ENCODE measurements at regions of chr19 and their contacts with region 1.

Region 1: GRCh38 chr19:860481-861101 is 1.1 kb downstream of the CFD start:
- DNase-seq: peak; percentile 19 to 87 (median 56)
- ATAC-seq: peak; percentile 38
- H3K4me3 ChIP-seq: peak overlapping the region; percentile 20
- H3K4me3 Mint-ChIP-seq: peak overlapping the region; percentile 45
- H3K27ac ChIP-seq: no peak overlapping the region
- H3K27ac Mint-ChIP-seq: no peak overlapping the region
- H3K4me1 ChIP-seq: peaks cover 49% of the 10 kb centered on the region
- H3K4me1 Mint-ChIP-seq: peaks cover 23% of the 10 kb centered on the region
- H3K27me3 ChIP-seq: peaks cover 9 to 16% of the 10 kb centered on the region in 2 experiments
- H3K27me3 Mint-ChIP-seq: peaks cover 7% of the 10 kb centered on the region
- CTCF ChIP-seq: no peak

Region 2: DNA sequence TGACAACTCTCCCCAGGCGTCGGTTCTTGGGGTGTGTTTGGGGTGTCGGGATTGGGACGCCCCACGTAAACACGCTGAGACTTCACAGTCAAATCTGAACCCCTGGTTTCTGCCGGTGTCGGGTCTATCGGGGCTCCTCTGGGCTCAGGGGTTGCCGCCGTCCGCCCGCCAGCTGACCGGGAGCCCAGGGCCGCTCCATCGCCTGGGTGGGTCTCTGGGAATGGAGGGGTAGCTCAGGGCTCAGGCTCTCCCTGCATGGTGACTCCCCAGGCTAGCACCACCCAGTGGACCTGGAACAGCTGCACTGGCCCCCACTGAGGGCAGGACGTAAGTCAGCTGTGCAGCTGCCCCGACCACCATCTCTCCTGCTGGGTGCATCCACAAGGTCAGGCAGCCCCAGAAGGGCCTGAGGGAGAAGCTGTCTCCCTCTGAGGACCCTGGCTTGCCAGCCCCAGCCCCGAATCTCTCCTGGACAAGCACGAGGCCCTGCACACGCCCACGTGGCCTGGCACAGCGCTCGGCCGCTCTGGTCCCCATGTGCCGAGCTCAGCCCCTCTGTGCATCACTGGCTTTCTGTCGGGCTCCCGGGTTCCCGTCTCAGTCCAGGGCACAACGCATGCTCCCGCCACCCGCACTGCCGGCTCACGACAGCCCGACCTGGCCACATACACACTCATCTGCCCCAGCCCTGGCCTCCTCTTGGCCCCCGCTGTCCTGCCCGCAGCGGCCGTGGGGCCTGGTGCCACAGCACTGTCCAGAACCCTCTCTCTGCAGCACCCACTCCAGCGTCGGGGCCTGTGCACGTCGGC is 203.6 kb before region 1 on chr19:
- CTCF ChIA-PET with region 1: no interaction called
- POLR2A ChIA-PET with region 1: no interaction called
- intact Hi-C with region 1: no loop called
- DNase-seq: peak in 2 of 14 experiments; percentile 5 to 37
- ATAC-seq: no peak
- H3K4me3 ChIP-seq: no peak overlapping the region
- H3K4me3 Mint-ChIP-seq: no peak overlapping the region
- H3K27ac ChIP-seq: peak overlapping the region in 1 of 2 donors; percentile 35
- H3K27ac Mint-ChIP-seq: peak overlapping the region; percentile 97
- H3K4me1 ChIP-seq: peaks cover 94% of the 10 kb centered on the region
- H3K4me1 Mint-ChIP-seq: peaks cover 53% of the 10 kb centered on the region
- H3K27me3 ChIP-seq: no peaks in the 10 kb centered on the region
- H3K27me3 Mint-ChIP-seq: no peaks in the 10 kb centered on the region
- CTCF ChIP-seq: no peak

Region 3: GRCh38 chr19:872266-872951 is 11.8 kb after region 1 on chr19:
- CTCF ChIA-PET with region 1: interaction called, 13 read pairs
- POLR2A ChIA-PET with region 1: interaction called, 11 read pairs
- intact Hi-C with region 1: no loop called
- DNase-seq: peak; percentile 72 to 93 (median 80)
- ATAC-seq: peak; percentile 82
- H3K4me3 ChIP-seq: peak overlapping the region; percentile 58
- H3K4me3 Mint-ChIP-seq: peak overlapping the region; percentile 89
- H3K27ac ChIP-seq: peak overlapping the region; percentile 41 to 62
- H3K27ac Mint-ChIP-seq: peak overlapping the region; percentile 94
- H3K4me1 ChIP-seq: peaks cover 16% of the 10 kb centered on the region
- H3K4me1 Mint-ChIP-seq: peaks cover 18% of the 10 kb centered on the region
- H3K27me3 ChIP-seq: no peaks in the 10 kb centered on the region
- H3K27me3 Mint-ChIP-seq: no peaks in the 10 kb centered on the region
- CTCF ChIP-seq: no peak

Region 4: GRCh38 chr19:907183-907853 is 46.7 kb after region 1 on chr19:
- CTCF ChIA-PET with region 1: interaction called, 24 read pairs
- POLR2A ChIA-PET with region 1: interaction called, 24 read pairs
- intact Hi-C with region 1: no loop called
- DNase-seq: peak in 4 of 14 experiments; percentile 47 to 62 (median 53)
- ATAC-seq: no peak
- H3K4me3 ChIP-seq: no peak overlapping the region
- H3K4me3 Mint-ChIP-seq: peak overlapping the region; percentile 71
- H3K27ac ChIP-seq: peak overlapping the region; percentile 69 to 99
- H3K27ac Mint-ChIP-seq: peak overlapping the region; percentile 100
- H3K4me1 ChIP-seq: peaks cover 81% of the 10 kb centered on the region
- H3K4me1 Mint-ChIP-seq: peaks cover 56% of the 10 kb centered on the region
- H3K27me3 ChIP-seq: no peaks in the 10 kb centered on the region
- H3K27me3 Mint-ChIP-seq: no peaks in the 10 kb centered on the region
- CTCF ChIP-seq: no peak

Region 5: DNA sequence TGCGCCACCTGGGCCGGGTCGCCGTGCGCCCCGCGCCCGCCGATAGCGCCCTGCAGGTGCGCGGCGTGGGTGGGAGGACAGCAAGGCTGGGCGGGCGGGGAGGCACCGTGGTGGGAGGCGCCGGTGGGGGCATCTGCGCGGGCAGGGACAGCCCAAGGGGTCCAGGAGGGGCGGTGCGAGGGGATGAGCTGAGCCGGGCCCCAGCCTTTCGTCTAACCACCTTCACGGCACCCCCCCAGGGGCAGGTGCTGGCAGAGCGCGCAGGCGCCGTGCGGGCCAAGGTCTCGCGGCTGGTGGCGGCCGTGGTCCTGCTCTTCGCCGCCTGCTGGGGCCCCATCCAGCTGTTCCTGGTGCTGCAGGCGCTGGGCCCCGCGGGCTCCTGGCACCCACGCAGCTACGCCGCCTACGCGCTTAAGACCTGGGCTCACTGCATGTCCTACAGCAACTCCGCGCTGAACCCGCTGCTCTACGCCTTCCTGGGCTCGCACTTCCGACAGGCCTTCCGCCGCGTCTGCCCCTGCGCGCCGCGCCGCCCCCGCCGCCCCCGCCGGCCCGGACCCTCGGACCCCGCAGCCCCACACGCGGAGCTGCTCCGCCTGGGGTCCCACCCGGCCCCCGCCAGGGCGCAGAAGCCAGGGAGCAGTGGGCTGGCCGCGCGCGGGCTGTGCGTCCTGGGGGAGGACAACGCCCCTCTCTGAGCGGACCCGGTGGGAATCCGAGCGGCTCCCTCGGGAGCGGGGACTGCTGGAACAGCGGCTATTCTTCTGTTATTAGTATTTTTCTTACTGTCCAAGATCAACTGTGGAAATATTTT is 59.7 kb after region 1 on chr19:
- CTCF ChIA-PET with region 1: interaction called, 52 read pairs
- POLR2A ChIA-PET with region 1: interaction called, 40 read pairs
- intact Hi-C with region 1: loop called (anchors 1 kb)
- DNase-seq: peak; percentile 54 to 91 (median 72)
- ATAC-seq: peak; percentile 51
- H3K4me3 ChIP-seq: peak overlapping the region; percentile 43
- H3K4me3 Mint-ChIP-seq: peak overlapping the region; percentile 96
- H3K27ac ChIP-seq: peak overlapping the region in 1 of 2 donors; percentile 41
- H3K27ac Mint-ChIP-seq: peak overlapping the region; percentile 96
- H3K4me1 ChIP-seq: peaks cover 62% of the 10 kb centered on the region
- H3K4me1 Mint-ChIP-seq: peaks cover 21% of the 10 kb centered on the region
- H3K27me3 ChIP-seq: peaks cover 11 to 22% of the 10 kb centered on the region in 2 experiments
- H3K27me3 Mint-ChIP-seq: peaks cover 4% of the 10 kb centered on the region
- CTCF ChIP-seq: no peak

Region 6: DNA sequence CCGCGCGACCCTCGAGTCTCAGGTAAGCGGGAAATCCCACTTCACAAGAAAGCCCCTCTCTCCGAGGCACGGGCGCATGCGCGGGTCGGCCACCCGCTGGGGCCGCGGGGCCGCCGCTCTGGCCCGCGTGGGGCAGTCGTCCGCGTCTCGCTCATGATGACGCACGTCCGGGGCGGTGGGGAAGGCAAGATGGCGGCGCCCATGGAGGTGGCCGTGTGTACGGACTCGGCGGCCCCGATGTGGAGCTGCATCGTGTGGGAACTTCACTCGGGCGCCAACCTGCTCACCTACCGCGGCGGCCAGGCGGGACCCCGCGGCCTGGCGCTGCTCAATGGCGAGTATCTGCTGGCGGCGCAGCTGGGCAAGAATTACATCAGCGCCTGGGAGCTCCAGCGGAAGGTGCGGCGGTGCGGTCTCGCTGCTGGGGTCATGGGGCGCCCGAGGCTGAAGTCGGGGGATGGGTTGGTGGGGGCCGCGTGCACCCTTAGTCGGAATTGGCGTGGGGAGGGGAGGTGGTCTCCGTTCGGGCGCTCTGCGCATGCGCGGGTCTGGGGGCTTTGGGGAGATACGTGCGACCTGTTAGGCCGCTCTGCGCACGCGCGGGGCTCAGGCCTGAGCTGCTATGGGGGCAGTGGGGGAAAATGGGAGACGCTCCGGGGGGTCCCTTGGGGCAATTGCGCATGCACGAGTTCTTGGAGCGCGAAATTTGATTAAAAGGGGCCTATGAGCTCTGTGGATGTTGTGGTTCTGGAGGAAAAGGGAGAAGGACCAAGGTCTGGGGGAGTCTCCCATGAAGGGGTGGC is 123.8 kb after region 1 on chr19 and contains the start of gene WDR18:
- CTCF ChIA-PET with region 1: interaction called, 19 read pairs
- POLR2A ChIA-PET with region 1: interaction called, 5 read pairs
- intact Hi-C with region 1: loop called (anchors 2 to 5 kb)
- DNase-seq: peak; percentile 71 to 94 (median 84)
- ATAC-seq: peak; percentile 90
- H3K4me3 ChIP-seq: peak within 1 kb of the TSS; percentile 96
- H3K4me3 Mint-ChIP-seq: peak within 1 kb of the TSS; percentile 94
- H3K27ac ChIP-seq: peak within 1 kb of the TSS; percentile 72 to 75
- H3K27ac Mint-ChIP-seq: peak within 1 kb of the TSS; percentile 78
- H3K4me1 ChIP-seq: peaks cover 34% of the 10 kb centered on the region
- H3K4me1 Mint-ChIP-seq: peaks cover 15% of the 10 kb centered on the region
- H3K27me3 ChIP-seq: no peaks in the 10 kb centered on the region
- H3K27me3 Mint-ChIP-seq: no peaks in the 10 kb centered on the region
- CTCF ChIP-seq: no peak
- total RNA-seq, gene WDR18: 16.8 to 17.1 TPM